RWPE1 (cell line): ENCODE measurements at regions of chr16 and their contacts with region 1.

Region 1: GRCh38 chr16:82433042-82433441 is 193.7 kb upstream of the CDH13 start:
- DNase-seq: no peak
- H3K27ac ChIP-seq: no peak overlapping the region
- CTCF ChIP-seq: no peak

Region 2: GRCh38 chr16:82506692-82507670 is 73.9 kb after region 1 on chr16:
- CTCF ChIA-PET with region 1: no interaction called
- POLR2A ChIA-PET with region 1: no interaction called
- DNase-seq: no peak
- H3K27ac ChIP-seq: no peak overlapping the region
- CTCF ChIP-seq: no peak

Region 3: GRCh38 chr16:82671741-82672140 is 238.7 kb after region 1 on chr16:
- CTCF ChIA-PET with region 1: interaction called, 10 read pairs
- POLR2A ChIA-PET with region 1: no interaction called
- DNase-seq: no peak
- H3K27ac ChIP-seq: no peak overlapping the region
- CTCF ChIP-seq: no peak